ENCODE measurements at regions of chr18 and their contacts with region 1.

Region 1: DNA sequence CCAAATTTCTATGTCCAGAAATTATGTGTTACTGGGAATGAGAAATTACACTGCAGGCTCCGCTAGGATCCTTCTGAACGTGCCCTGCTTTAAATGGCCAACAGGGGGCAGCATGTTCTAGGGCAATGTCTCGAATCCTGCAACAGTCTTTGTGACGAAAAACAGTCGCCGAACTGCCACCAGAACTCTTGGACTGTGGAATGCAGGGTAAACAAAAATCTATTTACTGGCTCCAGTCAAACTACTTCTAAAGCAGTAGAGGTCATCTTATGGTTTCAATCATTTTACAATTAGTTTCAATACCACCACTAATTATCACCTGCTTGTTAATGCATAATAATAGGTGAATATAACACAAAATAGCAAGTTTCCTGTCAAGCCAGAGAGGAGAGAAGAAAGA is 9.8 kb upstream of the ZNF397 start:
- DNase-seq: peak; percentile 62
- ATAC-seq: peak; percentile 88
- H3K4me3 ChIP-seq: peak overlapping the region in 1 of 2 experiments; percentile 24; a peak in 2 of 4 replicates
- H3K27ac ChIP-seq: no peak overlapping the region
- H3K4me1 ChIP-seq: no peaks in the 10 kb centered on the region; the same call in 1 of the 2 replicates
- H3K27me3 ChIP-seq: no peaks in the 10 kb centered on the region
- CTCF ChIP-seq: peak; percentile 87

Region 2: GRCh38 chr18:35005963-35006577 is 225.0 kb before region 1 on chr18:
- CTCF ChIA-PET with region 1: no interaction called
- POLR2A ChIA-PET with region 1: no interaction called
- in situ Hi-C with region 1: no loop called
- intact Hi-C with region 1: loop called (anchors 5 kb)
- DNase-seq: peak; percentile 46
- ATAC-seq: peak; percentile 95
- H3K4me3 ChIP-seq: no peak overlapping the region
- H3K27ac ChIP-seq: no peak overlapping the region
- H3K4me1 ChIP-seq: no peaks in the 10 kb centered on the region
- H3K27me3 ChIP-seq: no peaks in the 10 kb centered on the region
- CTCF ChIP-seq: peak; percentile 62

Region 3: DNA sequence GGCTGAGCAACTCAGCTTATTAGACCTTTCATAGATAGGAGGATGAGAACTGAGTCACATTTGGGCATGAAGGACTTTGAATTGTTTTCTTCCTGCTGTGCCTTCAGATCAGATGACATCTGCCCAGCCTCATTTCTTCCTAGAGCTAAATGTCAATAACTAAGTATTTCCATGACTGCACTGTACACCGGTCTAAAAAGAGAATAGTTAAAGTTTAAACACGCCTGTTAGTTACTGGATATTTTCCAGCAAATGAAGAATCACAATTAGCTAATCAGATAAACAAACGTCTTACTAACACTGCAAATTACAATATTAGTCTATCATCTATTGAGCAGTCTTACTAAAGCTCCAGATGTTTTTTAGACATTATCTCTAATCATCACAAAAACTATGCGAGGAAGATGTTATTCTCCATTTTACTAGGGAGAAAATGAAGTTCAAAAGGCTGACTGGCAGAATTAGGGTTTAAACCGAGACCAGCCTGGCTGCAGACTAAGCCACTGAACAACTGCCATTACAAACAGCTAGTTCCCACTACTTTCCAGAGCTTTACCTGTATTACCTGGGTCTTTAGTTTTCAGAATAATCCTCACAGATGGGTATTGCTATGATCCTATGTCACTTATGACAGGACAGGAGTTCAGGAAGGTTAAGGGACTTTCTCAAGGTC is 59.6 kb before region 1 on chr18:
- CTCF ChIA-PET with region 1: no interaction called
- POLR2A ChIA-PET with region 1: no interaction called
- in situ Hi-C with region 1: no loop called
- intact Hi-C with region 1: no loop called
- DNase-seq: no peak
- ATAC-seq: no peak
- H3K4me3 ChIP-seq: no peak overlapping the region
- H3K27ac ChIP-seq: no peak overlapping the region
- H3K4me1 ChIP-seq: no peaks in the 10 kb centered on the region
- H3K27me3 ChIP-seq: no peaks in the 10 kb centered on the region
- CTCF ChIP-seq: no peak

Region 4: DNA sequence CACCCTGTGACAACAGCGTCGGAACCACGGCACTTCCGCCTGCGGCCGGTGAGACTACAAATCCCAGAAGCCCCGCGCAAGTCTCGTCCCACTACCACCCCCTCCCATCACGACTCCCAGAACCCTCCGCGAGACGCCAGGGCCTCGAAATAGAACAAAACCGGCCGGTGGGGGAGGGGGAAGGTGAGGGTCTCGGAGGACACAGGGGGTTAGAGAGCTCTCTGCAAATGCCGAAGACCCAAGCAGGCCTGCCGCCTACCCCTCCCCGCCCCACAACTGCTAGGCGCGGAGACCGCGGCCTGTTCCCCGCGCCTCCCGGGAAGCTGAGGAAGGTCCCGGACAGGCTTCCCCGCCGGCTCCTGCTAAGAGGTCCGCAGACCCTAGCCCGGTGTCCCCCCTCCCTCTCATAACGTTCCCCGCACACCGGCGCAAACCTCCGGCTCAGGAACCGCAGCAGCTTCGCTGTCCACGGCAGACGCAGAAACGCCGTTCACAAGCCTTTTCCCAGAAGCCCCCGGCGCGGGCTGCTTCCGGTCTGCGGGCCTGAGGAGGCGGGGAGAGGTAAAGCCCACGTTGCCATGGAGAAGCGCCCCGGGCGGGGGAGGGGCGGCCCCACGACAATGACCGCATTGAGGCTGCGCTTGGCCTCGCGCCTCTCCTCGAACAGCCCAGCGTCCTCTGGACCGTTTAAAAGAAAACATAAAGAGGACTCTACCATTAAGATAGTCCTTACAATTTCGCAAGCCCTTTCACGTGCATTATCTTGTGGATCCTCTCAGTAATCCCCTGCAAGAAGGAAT is 113.1 kb after region 1 on chr18 and contains the start of gene ZNF24:
- CTCF ChIA-PET with region 1: interaction called, 4 read pairs
- POLR2A ChIA-PET with region 1: no interaction called
- in situ Hi-C with region 1: no loop called
- intact Hi-C with region 1: loop called (anchors 10 kb)
- DNase-seq: peak; percentile 42
- ATAC-seq: peak; percentile 94
- H3K4me3 ChIP-seq: peak within 1 kb of the TSS; percentile 75 to 82
- H3K27ac ChIP-seq: peak within 1 kb of the TSS; percentile 92
- H3K4me1 ChIP-seq: peaks cover 20% of the 10 kb centered on the region
- H3K27me3 ChIP-seq: no peaks in the 10 kb centered on the region
- CTCF ChIP-seq: no peak
- total RNA-seq, gene ZNF24: 46.8 TPM

Measured in Panc1 (cell line).